ENCODE measurements at regions of chr6 and their contacts with region 1.

Region 1: GRCh38 chr6:2749969-2750600 is 637 bp downstream of the MYLK4 start:
- DNase-seq: peak; percentile 45
- H3K27ac ChIP-seq: no peak overlapping the region
- CTCF ChIP-seq: peak; percentile 90

Region 2: DNA sequence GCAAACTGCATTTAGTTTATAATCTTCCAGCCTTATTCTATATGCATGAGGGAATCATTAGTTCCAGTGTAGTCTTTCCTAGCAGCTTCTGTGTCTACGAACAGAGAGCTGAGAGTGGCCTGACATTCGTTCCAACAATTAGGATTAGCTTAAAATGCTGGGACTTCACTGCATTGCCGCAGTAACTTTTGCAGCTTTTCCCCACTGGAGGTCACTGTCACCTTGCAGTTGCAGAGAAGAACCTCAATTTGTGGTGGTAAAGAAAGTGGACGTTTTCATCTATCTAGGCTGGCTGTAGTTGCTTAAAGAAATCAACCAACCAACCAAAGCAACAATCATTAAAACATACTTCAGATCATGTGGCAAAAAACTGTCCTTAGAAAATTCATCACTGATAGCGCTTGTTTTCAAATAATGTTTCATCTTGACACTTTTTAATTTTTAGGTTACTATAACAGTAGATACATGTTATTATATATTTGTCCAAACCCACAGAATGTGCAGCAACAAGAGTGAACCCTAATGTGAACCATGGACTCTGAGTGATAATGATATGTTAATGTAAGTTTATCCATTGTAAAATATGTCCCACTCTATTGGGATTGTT is 11.6 kb before region 1 on chr6:
- CTCF ChIA-PET with region 1: interaction called, 10 read pairs
- POLR2A ChIA-PET with region 1: no interaction called
- DNase-seq: peak; percentile 35
- H3K27ac ChIP-seq: no peak overlapping the region
- CTCF ChIP-seq: peak; percentile 76

Measured in RWPE1 (cell line).